GM12878 (cell line): ENCODE measurements at regions of chr7 and their contacts with region 1.

Region 1: DNA sequence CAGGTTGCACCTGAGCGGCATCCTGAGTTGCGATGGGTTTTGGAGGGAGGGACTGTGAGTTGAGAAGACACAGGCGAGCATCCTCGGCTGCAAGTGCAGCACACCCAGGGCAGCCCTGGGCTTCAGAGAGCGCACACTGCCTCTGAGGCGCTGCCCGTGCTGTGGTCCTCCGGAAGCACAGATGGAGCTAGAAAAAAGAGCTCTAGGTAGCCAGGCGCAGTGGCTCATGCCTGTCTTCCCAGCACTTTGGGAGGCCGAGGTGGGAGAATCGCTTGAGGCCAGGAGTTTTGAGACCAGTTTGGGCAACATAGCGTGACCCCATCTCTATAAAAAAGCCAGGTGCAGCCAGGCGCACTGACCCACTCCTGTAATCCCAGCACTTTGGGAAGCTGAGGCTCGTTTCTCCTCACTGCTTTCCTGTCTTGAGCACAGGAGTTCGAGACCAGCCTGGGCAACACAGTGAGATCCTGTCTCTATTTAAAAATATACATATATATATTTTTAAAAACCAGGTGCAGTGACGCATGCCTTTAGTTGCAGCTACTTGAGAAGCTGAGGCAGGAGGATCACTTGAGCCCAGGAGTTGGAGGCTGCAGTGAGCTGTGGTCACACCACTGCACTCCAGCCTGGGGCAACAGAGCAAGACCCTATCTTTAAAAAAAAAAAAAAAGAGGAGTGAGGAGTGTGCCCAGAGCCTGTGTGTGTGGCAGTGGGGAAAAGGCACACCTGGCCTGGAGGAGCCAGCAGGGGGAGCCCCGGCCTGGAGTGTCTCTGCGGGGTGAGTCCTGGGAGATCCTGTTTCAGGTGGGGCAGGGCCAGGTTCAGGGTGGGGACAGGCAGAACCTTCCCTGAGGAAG is 9.3 kb upstream of the ARPC1B start:
- DNase-seq: no peak
- ATAC-seq: peak; percentile 96
- H3K4me3 ChIP-seq: no peak overlapping the region
- H3K27ac ChIP-seq: no peak overlapping the region
- H3K4me1 ChIP-seq: no peaks in the 10 kb centered on the region
- H3K27me3 ChIP-seq: no peaks in the 10 kb centered on the region
- CTCF ChIP-seq: peak; percentile 52 to 71 (median 69)
- EP300 ChIP-seq: no peak
- POLR2A ChIP-seq: no peak
- RAD21 ChIP-seq: peak; percentile 61

Region 2: DNA sequence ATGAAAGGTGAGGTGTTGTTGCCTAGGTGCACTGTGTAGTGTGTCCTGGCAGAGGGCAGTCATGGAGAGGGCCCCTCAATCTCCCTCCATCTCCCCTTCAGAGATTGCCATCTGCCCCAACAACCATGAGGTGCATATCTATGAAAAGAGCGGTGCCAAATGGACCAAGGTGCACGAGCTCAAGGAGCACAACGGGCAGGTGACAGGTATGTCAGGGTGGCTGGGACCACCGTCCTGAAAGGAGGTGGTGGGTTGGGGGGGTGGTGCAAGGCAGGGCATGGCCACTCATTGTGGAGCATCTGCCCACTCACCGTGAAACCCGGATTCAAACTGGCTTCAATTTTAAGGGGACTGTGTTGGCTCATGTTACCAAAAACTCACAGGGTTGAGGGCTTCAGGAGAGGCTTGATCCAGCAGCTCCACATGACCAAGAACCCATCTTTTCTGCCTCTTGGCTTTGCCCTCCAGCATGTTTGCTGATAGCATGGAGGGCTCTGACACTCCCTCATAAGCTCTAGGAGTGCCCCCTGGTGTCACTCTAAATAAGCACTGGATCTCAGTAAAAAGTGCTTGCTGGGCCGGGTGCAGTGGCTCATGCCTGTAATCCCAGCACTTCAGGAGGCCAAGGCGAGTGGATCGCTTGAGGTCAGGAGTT is 21.5 kb after region 1 on chr7:
- CTCF ChIA-PET with region 1: interaction called, 14 read pairs
- POLR2A ChIA-PET with region 1: no interaction called
- RAD21 ChIA-PET with region 1: interaction called, 3 read pairs
- SMC1A ChIA-PET with region 1: interaction called, 3 read pairs
- in situ Hi-C with region 1: no loop called
- intact Hi-C with region 1: loop called (anchors 1 kb)
- DNase-seq: no peak
- ATAC-seq: peak; percentile 84
- H3K4me3 ChIP-seq: no peak overlapping the region
- H3K27ac ChIP-seq: no peak overlapping the region
- H3K4me1 ChIP-seq: peaks cover 3% of the 10 kb centered on the region
- H3K27me3 ChIP-seq: no peaks in the 10 kb centered on the region
- CTCF ChIP-seq: peak; percentile 39 to 57 (median 44); a peak in 5 of 6 replicates
- EP300 ChIP-seq: no peak
- POLR2A ChIP-seq: no peak
- RAD21 ChIP-seq: peak; percentile 60

Region 3: DNA sequence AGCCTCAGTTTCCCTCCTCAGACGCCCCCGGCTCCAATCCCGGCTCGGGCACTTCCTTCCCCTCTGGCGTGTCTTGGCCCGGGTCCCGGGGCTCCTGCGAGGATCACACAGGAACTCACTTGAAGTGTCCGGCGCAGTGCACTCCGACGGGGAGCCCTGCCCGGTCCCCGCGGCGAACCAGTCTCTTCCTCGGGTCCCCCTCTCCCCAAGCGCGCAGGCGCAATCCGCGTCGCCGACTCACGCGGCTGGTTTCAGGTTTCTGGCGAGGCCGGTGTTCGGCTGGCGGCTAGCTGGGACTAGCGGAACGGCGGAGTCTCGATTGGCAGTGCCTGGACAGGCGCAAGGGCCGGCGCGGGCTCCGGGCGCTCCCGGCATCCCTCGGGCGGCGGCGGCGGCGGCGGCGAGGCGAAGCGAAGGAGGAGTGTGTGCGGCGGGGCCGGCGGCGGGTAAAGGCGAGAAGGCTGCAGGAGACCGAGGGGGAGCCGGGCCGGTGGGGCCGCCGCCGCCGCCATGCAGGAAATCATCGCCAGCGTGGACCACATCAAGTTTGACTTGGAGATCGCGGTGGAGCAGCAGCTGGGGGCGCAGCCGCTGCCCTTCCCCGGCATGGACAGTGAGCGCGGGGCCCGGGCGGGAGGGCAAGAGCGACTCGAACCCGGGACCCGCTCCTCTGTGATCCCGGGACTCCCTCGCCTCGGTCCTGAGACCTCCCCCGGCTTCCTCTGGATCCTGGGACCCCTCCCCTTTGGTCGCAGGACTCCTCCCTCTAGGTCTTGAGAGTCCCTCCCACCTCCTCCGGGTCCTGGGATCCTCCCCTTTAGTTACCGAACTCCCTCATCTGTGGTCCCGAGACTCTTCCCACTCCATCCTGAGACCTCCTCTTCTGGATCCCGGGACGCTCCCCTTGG is 73.6 kb after region 1 on chr7 and contains the starts of genes CPSF4 and PTCD1:
- CTCF ChIA-PET with region 1: no interaction called
- POLR2A ChIA-PET with region 1: no interaction called
- RAD21 ChIA-PET with region 1: no interaction called
- SMC1A ChIA-PET with region 1: no interaction called
- in situ Hi-C with region 1: no loop called
- intact Hi-C with region 1: no loop called
- DNase-seq: peak; percentile 71
- ATAC-seq: peak; percentile 96
- H3K4me3 ChIP-seq: peak within 1 kb of the TSS; percentile 93
- H3K27ac ChIP-seq: peak within 1 kb of the TSS; percentile 80
- H3K4me1 ChIP-seq: peaks cover 11% of the 10 kb centered on the region
- H3K27me3 ChIP-seq: no peaks in the 10 kb centered on the region
- CTCF ChIP-seq: no peak
- EP300 ChIP-seq: no peak
- POLR2A ChIP-seq: peak; percentile 89
- RAD21 ChIP-seq: no peak
- polyA plus RNA-seq, gene CPSF4: 13.6 to 14.9 TPM
- polyA plus RNA-seq, gene PTCD1: 0.26 to 0.42 TPM

Region 4: GRCh38 chr7:99642027-99642426 is 276.8 kb after region 1 on chr7:
- CTCF ChIA-PET with region 1: no interaction called
- POLR2A ChIA-PET with region 1: no interaction called
- RAD21 ChIA-PET with region 1: no interaction called
- SMC1A ChIA-PET with region 1: no interaction called
- in situ Hi-C with region 1: no loop called
- intact Hi-C with region 1: no loop called
- DNase-seq: no peak
- ATAC-seq: no peak
- H3K4me3 ChIP-seq: no peak overlapping the region
- H3K27ac ChIP-seq: no peak overlapping the region
- H3K4me1 ChIP-seq: no peaks in the 10 kb centered on the region
- H3K27me3 ChIP-seq: no peaks in the 10 kb centered on the region
- CTCF ChIP-seq: no peak
- EP300 ChIP-seq: no peak
- POLR2A ChIP-seq: no peak
- RAD21 ChIP-seq: no peak